ENCODE measurements at regions of chr15 and their contacts with region 1.

Region 1: GRCh38 chr15:78308422-78309032 is 9.1 kb upstream of the SKIC8 start:
- DNase-seq: peak; percentile 87
- ATAC-seq: peak; percentile 84

Region 2: GRCh38 chr15:78422571-78423340 is 114.2 kb after region 1 on chr15:
- intact Hi-C with region 1: loop called (anchors 1 kb)
- DNase-seq: peak; percentile 76
- ATAC-seq: peak; percentile 54

Region 3: GRCh38 chr15:78481917-78482316 is 173.4 kb after region 1 on chr15:
- intact Hi-C with region 1: loop called (anchors 5 kb)
- DNase-seq: no peak
- ATAC-seq: no peak

Measured in Right ventricle myocardium inferior (tissue), 1 donor.